GM10248 (cell line): ENCODE measurements at regions of chr2 and their contacts with region 1.

Region 1: GRCh38 chr2:58798676-58799208 is 557.6 kb upstream of the FANCL start:
- DNase-seq: no peak
- CTCF ChIP-seq: no peak

Region 2: DNA sequence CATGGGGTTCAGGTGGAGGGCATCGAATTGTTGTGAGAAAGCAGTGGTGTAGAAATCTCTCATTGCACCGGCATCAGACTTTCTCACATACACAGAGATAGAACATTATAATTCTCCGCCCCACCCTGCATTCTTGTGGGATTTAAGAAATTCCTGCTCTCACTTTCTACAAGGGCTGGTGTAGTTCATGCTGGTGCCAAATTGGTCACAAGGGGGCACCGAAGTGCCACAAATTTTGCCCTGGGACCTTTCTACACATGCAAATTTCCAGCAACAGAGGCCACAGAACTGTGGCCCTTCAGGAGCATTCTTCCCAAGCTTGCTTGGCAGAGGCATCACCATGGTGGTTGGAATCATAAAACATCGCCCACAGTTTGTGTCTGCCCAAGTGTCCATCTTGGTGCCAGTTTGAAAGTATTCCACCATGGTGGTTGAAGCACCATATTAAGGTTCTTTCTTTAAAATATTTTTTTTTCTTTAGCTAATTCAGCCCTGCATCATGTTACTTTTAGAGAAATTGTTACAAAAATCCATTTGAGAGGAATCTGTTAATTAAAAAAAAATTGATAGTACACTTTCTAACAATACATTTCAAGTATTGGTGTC is 36.5 kb before region 1 on chr2:
- CTCF ChIA-PET with region 1: no interaction called
- POLR2A ChIA-PET with region 1: no interaction called
- DNase-seq: no peak
- CTCF ChIP-seq: peak; percentile 64

Region 3: GRCh38 chr2:58788402-58788801 is 10.3 kb before region 1 on chr2:
- CTCF ChIA-PET with region 1: interaction called, 14 read pairs
- POLR2A ChIA-PET with region 1: no interaction called
- DNase-seq: no peak
- CTCF ChIP-seq: no peak

Region 4: DNA sequence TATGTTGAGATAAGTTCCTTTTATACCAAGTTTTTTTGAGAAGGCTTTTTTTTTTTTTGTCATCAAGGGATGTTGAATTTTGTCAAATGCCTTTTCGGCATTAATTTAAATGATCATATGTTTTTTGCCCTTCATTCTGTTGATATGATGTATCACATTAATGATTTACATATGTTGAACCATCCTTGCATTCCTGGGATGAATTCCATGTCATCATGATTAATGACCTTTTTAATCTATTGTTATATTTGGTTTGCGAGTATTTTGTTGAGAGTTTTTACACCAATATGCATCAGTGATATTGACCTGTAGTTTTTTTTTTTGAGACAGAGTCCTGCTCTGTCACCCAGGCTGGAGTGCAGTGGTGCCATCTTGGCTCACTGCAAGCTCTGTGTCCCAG is 28.1 kb after region 1 on chr2:
- CTCF ChIA-PET with region 1: no interaction called
- POLR2A ChIA-PET with region 1: no interaction called
- DNase-seq: no peak
- CTCF ChIP-seq: no peak

Region 5: GRCh38 chr2:58893656-58894351 is 95.1 kb after region 1 on chr2:
- CTCF ChIA-PET with region 1: no interaction called
- POLR2A ChIA-PET with region 1: no interaction called
- DNase-seq: no peak
- CTCF ChIP-seq: no peak